CD4-positive, alpha-beta memory T cell (primary cell): ENCODE measurements at regions of chr10 and their contacts with region 1.

Region 1: GRCh38 chr10:28302638-28303488 is at the start of gene MPP7:
- DNase-seq: peak; percentile 96 to 98 (median 97)
- H3K4me3 ChIP-seq: peak within 1 kb of the TSS; percentile 82 to 93
- H3K4me3 Mint-ChIP-seq: peak within 1 kb of the TSS; percentile 88 to 97 (median 94)
- H3K27ac ChIP-seq: peak within 1 kb of the TSS; percentile 51
- H3K27ac Mint-ChIP-seq: peak within 1 kb of the TSS; percentile 87 to 95 (median 93)
- H3K4me1 ChIP-seq: peaks cover 48% of the 10 kb centered on the region
- H3K4me1 Mint-ChIP-seq: peaks cover 44 to 76% (median 57%) of the 10 kb centered on the region in 4 donors
- H3K27me3 ChIP-seq: no peaks in the 10 kb centered on the region
- H3K27me3 Mint-ChIP-seq: no peaks in the 10 kb centered on the region
- total RNA-seq, gene MPP7: 24.9 to 28.1 TPM

Region 2: DNA sequence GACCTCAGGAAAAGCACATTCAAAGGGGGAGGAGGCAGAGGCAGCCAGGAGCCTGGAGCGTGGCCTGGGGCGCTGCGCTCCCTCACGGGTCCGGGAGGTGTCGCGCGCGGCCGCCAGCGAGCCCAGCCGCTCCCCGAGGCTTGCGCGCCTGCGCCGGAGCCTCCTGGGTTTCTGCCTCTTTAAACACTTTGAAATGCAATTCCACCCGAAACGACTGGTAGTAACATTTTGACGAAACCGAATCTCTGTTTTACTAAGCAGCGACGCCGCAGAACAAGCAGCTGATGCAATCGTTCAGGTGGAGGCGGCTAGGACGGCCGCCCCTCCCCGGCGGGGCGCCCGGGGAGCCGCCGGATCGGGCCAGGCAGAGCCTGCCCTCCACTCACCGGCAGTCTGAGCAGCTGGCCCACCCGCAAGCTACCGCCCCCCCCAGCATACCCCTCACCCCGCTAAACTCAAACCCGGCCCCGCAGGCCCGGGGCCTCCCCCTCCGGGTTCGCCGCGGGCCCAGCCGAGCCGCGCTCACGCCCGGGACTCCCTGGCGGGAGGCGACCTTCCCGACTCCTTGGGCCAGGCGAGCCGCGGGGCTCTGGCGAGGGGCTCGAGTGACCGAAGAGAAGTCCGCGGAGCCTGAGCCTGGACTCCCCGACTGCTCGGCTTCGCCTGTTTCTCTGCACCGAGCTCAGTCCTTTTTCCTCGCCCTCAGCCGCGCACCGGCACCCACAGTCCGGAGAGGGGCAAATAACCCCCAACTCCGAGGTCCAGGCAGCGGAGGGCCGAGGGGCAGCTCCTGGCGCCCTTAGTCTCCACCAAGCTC is 560.5 kb before region 1 on chr10:
- CTCF ChIA-PET with region 1: interaction called, 4 read pairs
- POLR2A ChIA-PET with region 1: interaction called, 4 read pairs
- intact Hi-C with region 1: loop called (anchors 1 kb)
- DNase-seq: peak; percentile 77 to 82 (median 80)
- H3K4me3 ChIP-seq: peak overlapping the region; percentile 22 to 68
- H3K4me3 Mint-ChIP-seq: peak overlapping the region; percentile 82 to 96 (median 89)
- H3K27ac ChIP-seq: no peak overlapping the region
- H3K27ac Mint-ChIP-seq: peak overlapping the region in 1 of 7 donors; percentile 57
- H3K4me1 ChIP-seq: peaks cover 56% of the 10 kb centered on the region
- H3K4me1 Mint-ChIP-seq: peaks cover 23 to 47% (median 35%) of the 10 kb centered on the region in 4 donors
- H3K27me3 ChIP-seq: peaks cover 52% of the 10 kb centered on the region
- H3K27me3 Mint-ChIP-seq: peaks cover 45 to 48% of the 10 kb centered on the region in 2 donors

Region 3: DNA sequence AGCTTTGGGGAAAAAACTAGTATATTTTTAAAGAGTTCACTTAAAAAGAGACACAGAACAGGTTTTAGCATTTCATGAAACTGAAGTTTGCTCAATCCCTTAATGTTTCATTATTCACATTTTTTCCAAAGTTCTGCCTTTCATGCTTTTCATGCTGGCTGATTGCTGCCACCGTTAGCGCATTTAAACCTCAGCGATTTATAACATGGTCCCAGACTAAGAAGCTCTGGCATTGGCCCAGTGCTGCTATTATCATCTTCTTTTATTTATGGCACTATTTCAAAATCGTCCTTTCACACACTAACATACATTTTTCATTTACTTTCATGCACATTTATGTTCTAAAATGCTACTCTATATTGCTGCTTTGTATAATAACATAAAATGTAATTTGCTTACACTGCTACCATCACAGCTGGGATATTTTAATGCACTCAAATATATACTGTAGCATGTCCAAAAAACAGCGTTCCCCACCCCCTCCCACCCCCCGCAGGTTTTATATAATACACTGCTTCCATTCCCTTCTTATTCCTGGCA is 141.9 kb before region 1 on chr10:
- CTCF ChIA-PET with region 1: no interaction called
- POLR2A ChIA-PET with region 1: no interaction called
- intact Hi-C with region 1: no loop called
- DNase-seq: no peak
- H3K4me3 ChIP-seq: no peak overlapping the region
- H3K4me3 Mint-ChIP-seq: no peak overlapping the region
- H3K27ac ChIP-seq: no peak overlapping the region
- H3K27ac Mint-ChIP-seq: no peak overlapping the region
- H3K4me1 ChIP-seq: no peaks in the 10 kb centered on the region
- H3K4me1 Mint-ChIP-seq: peaks cover 10 to 19% (median 13%) of the 10 kb centered on the region in 4 donors
- H3K27me3 ChIP-seq: no peaks in the 10 kb centered on the region
- H3K27me3 Mint-ChIP-seq: no peaks in the 10 kb centered on the region

Region 4: GRCh38 chr10:28250782-28251181 is 52.1 kb before region 1 on chr10:
- CTCF ChIA-PET with region 1: interaction called, 19 read pairs
- POLR2A ChIA-PET with region 1: interaction called, 5 read pairs
- intact Hi-C with region 1: loop called (anchors 5 kb)
- DNase-seq: peak in 4 of 5 donors; percentile 26 to 38 (median 33)
- H3K4me3 ChIP-seq: no peak overlapping the region
- H3K4me3 Mint-ChIP-seq: no peak overlapping the region
- H3K27ac ChIP-seq: no peak overlapping the region
- H3K27ac Mint-ChIP-seq: peak overlapping the region in 1 of 7 donors; percentile 26
- H3K4me1 ChIP-seq: no peaks in the 10 kb centered on the region
- H3K4me1 Mint-ChIP-seq: peaks cover 7 to 22% (median 10%) of the 10 kb centered on the region in 4 donors
- H3K27me3 ChIP-seq: no peaks in the 10 kb centered on the region
- H3K27me3 Mint-ChIP-seq: no peaks in the 10 kb centered on the region

Region 5: DNA sequence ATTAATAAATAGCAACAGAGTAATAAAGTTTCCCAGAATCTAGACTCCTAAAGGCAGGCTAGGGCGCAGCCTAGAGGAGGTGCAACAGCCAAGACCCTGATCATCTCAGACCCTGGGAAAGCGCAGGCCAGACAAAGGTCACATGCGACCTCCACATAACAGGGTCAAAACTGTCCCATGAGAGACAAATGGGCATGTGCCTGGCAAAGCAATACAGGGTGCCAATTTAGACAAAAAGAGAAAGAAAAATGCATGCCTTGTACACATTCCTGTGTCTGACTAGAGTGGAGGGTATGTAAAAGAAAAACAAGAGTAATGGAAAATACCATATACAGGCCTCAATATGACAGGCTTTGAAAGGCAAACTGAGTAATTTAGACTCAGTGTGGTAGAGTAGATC is 22.2 kb before region 1 on chr10:
- CTCF ChIA-PET with region 1: no interaction called
- POLR2A ChIA-PET with region 1: no interaction called
- intact Hi-C with region 1: no loop called
- DNase-seq: no peak
- H3K4me3 ChIP-seq: no peak overlapping the region
- H3K4me3 Mint-ChIP-seq: no peak overlapping the region
- H3K27ac ChIP-seq: no peak overlapping the region
- H3K27ac Mint-ChIP-seq: peak overlapping the region in 1 of 7 donors; percentile 57
- H3K4me1 ChIP-seq: peaks cover 6% of the 10 kb centered on the region
- H3K4me1 Mint-ChIP-seq: peaks cover 23 to 62% (median 35%) of the 10 kb centered on the region in 4 donors
- H3K27me3 ChIP-seq: no peaks in the 10 kb centered on the region
- H3K27me3 Mint-ChIP-seq: no peaks in the 10 kb centered on the region

Region 6: DNA sequence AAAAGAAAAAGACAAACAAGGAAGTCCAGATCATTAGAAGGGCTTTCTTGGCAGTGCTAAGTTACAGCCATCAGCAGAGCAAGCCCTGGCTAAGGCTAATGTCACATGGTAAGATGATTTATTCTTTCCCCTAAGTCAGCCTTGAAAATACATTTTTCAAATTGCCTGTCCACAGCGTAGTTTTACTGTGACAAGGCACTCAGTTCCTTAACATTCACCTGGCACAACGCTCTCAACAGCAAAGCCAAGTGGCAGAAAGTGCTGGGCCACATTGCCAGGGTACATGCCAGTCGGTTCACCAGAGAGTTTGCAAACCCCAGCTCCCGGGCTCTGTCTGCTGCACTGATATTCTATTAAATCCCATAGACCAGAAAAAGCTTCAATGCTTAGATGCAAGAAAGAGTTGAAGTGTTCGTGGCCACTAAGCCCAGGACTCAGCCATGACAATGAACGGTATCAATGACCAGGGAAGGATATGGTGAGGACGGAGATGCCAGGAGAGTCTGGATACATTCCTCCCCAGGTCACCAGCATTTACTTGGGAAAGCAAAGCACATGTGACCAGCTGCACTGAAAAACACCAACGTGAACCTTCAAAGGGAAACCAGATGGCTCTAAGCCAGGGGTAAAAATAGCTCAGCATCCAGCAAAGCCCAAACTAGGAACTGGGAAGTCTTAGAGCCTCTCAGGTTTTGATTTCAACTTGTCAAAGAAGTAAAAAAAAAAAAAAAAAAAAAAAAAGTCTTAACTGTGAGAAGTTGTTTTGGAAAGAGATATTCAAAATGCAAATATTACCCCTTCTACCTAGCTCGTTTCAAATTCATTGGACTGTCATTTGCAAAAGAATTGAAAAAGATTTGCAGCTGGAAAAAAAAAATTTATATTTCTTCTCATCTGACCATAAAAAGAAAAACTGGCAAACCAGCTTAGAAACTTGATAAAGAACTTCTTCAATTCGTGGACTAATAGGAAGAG is 23.9 kb after region 1 on chr10:
- CTCF ChIA-PET with region 1: interaction called, 191 read pairs
- POLR2A ChIA-PET with region 1: interaction called, 338 read pairs
- intact Hi-C with region 1: no loop called
- DNase-seq: no peak
- H3K4me3 ChIP-seq: no peak overlapping the region
- H3K4me3 Mint-ChIP-seq: peak overlapping the region; percentile 25 to 76 (median 52)
- H3K27ac ChIP-seq: no peak overlapping the region
- H3K27ac Mint-ChIP-seq: peak overlapping the region in 4 of 7 donors; percentile 10 to 88 (median 46)
- H3K4me1 ChIP-seq: peaks cover 62% of the 10 kb centered on the region
- H3K4me1 Mint-ChIP-seq: peaks cover 51 to 79% (median 61%) of the 10 kb centered on the region in 4 donors
- H3K27me3 ChIP-seq: no peaks in the 10 kb centered on the region
- H3K27me3 Mint-ChIP-seq: no peaks in the 10 kb centered on the region

Region 7: DNA sequence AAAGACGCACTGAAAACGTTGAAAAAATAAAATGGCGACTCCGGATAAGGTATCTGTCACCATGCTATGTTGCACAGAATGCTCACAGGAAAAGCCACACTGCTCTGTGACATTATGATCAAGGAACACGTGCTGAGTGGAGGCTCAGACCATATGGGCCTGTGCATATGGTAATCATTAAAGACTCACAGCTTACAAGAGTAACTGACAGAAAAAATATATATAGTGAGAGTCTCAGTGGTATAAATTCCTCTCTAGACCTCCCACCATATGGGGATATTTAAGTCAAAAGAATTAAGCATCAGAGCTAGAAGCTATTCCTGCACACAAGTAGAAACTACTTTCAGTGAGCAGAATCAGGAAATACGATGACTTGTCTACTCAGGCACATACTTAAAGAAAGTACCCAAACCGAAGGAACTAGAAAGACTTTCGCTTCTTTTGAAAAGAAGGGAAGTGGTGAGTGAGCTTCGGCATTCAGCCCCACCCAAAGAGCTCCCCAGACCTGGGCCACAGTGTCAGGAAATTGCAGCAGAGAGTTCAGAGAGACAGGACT is 65.1 kb after region 1 on chr10:
- CTCF ChIA-PET with region 1: interaction called, 27 read pairs
- POLR2A ChIA-PET with region 1: interaction called, 70 read pairs
- intact Hi-C with region 1: loop called (anchors 1 kb)
- DNase-seq: peak; percentile 74 to 86 (median 80)
- H3K4me3 ChIP-seq: no peak overlapping the region
- H3K4me3 Mint-ChIP-seq: peak overlapping the region; percentile 41 to 87 (median 80)
- H3K27ac ChIP-seq: peak overlapping the region; percentile 65
- H3K27ac Mint-ChIP-seq: peak overlapping the region; percentile 85 to 98 (median 97)
- H3K4me1 ChIP-seq: peaks cover 58% of the 10 kb centered on the region
- H3K4me1 Mint-ChIP-seq: peaks cover 33 to 61% (median 49%) of the 10 kb centered on the region in 4 donors
- H3K27me3 ChIP-seq: no peaks in the 10 kb centered on the region
- H3K27me3 Mint-ChIP-seq: no peaks in the 10 kb centered on the region

Region 8: DNA sequence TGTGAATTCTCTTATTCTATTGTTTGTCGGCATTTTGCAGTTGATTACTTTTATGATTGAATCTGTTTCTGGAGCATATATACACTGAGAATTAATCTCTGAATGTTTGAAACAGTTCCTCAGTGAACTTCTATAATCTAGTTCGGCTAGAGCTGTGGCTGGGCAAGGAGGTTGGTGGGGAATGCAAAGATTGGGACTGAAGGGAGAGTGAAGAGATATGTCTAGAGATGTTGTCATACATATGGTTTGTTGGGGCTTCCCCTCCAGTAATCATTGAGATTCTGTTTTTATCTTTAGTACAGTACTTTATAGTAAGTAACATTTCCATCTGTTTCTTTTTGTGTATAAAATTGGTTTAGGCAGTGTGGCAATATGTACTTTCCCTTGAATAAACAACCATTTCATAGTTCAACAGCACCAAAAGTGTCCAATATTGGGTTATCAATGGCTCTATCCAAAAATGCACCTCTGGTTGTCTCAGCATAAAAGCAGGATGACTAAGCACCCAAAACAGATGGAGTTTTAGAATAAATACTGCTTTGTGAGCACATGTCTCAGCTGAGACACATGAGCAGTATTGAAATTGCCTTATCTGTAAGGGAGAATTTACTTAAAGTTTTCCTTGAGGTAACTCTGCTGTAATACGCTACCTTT is 266.8 kb after region 1 on chr10:
- CTCF ChIA-PET with region 1: no interaction called
- POLR2A ChIA-PET with region 1: no interaction called
- intact Hi-C with region 1: no loop called
- DNase-seq: no peak
- H3K4me3 ChIP-seq: no peak overlapping the region
- H3K4me3 Mint-ChIP-seq: peak overlapping the region in 5 of 8 donors; percentile 10 to 55 (median 27)
- H3K27ac ChIP-seq: no peak overlapping the region
- H3K27ac Mint-ChIP-seq: peak overlapping the region in 5 of 7 donors; percentile 14 to 82 (median 34)
- H3K4me1 ChIP-seq: peaks cover 95% of the 10 kb centered on the region
- H3K4me1 Mint-ChIP-seq: peaks cover 59 to 97% (median 77%) of the 10 kb centered on the region in 4 donors
- H3K27me3 ChIP-seq: no peaks in the 10 kb centered on the region
- H3K27me3 Mint-ChIP-seq: no peaks in the 10 kb centered on the region